ENCODE measurements at regions of chr11 and their contacts with region 1.

Region 1: DNA sequence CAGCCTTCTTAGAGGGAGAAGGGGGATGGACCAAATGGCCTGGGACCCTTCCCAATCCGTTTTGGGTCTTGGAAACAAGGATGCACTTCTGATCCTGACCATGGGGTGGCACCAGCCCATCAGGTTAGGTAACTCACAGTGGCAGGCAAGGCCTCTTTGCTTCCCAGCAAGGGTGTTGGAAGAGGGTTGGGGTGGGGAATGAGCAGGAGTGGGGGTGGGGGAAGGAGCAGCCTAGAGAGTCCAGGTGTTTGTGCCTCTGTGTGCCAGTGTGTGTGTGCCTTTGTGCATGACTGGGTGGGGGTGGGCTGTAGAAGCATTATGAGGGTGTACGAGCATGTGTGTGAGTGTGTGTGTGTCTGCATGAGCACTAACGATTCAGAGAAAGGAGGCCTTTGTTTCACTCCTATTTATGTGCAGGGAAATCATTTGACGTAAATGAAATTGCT is 213.1 kb downstream of the INSC start:
- DNase-seq: peak; percentile 77
- H3K4me3 Mint-ChIP-seq: no peak overlapping the region
- H3K27ac Mint-ChIP-seq: no peak overlapping the region
- H3K4me1 Mint-ChIP-seq: no peaks in the 10 kb centered on the region
- H3K27me3 Mint-ChIP-seq: peaks cover 49% of the 10 kb centered on the region
- CTCF ChIP-seq: peak; percentile 58

Region 2: DNA sequence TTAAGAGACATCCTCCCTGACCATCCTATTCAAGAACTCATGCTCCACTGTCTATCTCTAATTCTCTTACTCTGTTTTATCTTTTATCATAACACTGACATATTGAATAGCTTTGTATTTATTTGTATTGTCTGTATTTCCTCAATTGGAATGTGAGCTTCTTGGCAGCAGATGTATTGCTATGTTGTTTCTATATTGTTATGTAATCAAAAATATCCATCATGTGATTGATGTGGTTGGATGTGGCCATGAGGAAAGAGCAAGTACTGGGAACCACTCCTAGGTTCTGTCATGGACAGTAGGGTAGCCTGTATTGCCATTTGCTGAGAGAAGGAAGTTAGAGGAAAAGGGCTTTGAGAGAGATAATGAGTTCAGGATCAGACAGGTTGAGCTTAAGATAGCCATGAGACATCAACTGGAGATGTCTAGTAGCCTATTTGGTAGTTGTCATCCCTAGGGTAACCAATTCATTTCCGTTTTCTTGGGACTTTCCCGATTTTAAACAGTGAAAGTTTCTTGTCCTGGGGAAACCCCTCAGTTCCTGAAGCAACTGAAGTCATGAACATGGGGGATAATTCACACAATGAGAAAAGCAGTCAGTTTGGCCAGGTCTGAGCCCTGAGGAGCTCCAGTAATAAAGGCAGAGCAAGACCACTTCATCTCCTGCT is 191.4 kb after region 1 on chr11:
- CTCF ChIA-PET with region 1: no interaction called
- intact Hi-C with region 1: no loop called
- DNase-seq: no peak
- H3K4me3 Mint-ChIP-seq: no peak overlapping the region
- H3K27ac Mint-ChIP-seq: no peak overlapping the region
- H3K4me1 Mint-ChIP-seq: peaks cover 10% of the 10 kb centered on the region
- H3K27me3 Mint-ChIP-seq: no peaks in the 10 kb centered on the region
- CTCF ChIP-seq: no peak

Region 3: DNA sequence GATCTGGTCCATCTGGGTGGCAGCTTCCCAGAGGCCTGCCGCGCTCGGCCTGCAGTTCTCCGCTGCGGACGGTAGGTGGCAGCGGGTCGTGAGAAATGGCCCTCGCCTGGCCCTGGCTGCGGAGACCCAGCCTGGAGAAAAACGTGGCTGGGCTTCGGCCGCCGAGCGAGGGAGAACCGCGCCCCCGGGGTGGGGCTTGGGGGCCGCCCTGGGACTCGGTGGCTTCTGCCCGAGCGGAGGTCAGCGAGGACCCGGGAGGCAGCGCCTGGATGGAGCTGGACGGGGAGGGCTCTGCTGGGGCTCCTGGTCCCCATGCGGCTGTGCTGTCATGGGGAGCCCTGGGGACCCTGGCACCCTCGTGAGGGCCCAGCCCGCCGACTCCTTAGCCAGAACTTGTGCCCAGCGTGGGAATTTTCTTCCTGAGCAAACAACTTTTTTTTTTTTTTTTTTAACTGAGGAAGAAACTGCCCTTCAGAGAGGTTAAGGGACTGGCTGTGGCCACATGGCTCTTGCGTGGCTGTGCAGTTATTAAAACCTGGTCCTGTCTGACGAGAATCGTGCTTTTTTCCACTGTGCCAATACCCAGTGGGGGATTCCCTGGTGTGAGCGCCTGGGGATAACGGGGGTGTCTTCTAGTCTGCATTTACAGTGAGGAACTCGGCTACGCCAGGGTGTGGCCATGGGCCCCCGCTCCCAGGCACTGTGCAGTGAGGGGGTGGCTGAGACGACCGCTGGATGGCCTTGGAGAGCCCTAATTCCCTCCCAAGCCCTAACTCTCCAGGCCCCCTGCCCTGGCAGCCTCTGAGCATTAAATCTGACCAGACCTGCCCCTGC is 322.5 kb after region 1 on chr11:
- CTCF ChIA-PET with region 1: no interaction called
- intact Hi-C with region 1: loop called (anchors 5 kb)
- DNase-seq: peak; percentile 97
- H3K4me3 Mint-ChIP-seq: peak overlapping the region; percentile 45
- H3K27ac Mint-ChIP-seq: no peak overlapping the region
- H3K4me1 Mint-ChIP-seq: peaks cover 30% of the 10 kb centered on the region
- H3K27me3 Mint-ChIP-seq: no peaks in the 10 kb centered on the region
- CTCF ChIP-seq: peak; percentile 95

Measured in Calu3 (cell line).